Posterior cingulate gyrus (tissue), 11 donors: ENCODE measurements at regions of chr22 and their contacts with region 1.

Region 1: GRCh38 chr22:37591823-37592404 is 12.0 kb upstream of the LGALS2 start:
- DNase-seq: no peak

Region 2: GRCh38 chr22:37309211-37310074 is 282.5 kb before region 1 on chr22:
- intact Hi-C with region 1: no loop called
- DNase-seq: no peak

Region 3: GRCh38 chr22:37538590-37539357 is 53.1 kb before region 1 on chr22:
- intact Hi-C with region 1: loop called (anchors 1 kb)
- DNase-seq: peak; percentile 82 to 99 (median 94)